AG04450 (cell line): ENCODE measurements at regions of chr7 and their contacts with region 1.

Region 1: DNA sequence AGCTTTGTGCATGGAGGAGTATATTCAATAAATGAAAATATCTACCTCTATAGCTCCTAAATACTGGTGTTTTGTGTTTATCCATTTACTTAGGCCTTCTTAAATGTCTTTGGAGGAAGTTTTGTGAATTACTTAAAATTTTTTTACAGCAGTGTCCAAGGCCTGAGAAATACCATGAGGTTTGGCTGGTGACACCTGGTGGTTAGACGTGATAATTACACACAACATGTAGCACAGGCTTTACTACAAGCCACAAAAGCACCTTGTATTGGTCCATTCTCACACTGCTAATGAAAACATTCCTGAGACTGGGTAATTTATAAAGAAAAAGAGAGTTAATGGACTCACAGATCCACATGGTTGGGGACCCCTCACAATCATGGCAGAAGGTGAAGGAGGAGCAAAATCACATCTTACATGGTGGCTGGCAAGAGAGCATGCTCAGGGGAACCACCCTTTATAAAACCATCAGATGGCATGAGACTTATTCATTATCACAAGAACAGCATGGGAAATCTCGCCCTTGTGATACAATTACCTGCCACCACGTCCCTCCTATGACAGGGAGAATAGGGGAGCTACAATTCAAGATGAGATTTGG is 20.6 kb downstream of the HYAL4 start:
- DNase-seq: peak; percentile 38
- H3K4me3 ChIP-seq: no peak overlapping the region
- H3K27ac ChIP-seq: no peak overlapping the region
- H3K27me3 ChIP-seq: peaks cover 2% of the 10 kb centered on the region
- CTCF ChIP-seq: peak; percentile 70

Region 2: GRCh38 chr7:123494193-123494796 is 371.3 kb before region 1 on chr7:
- CTCF ChIA-PET with region 1: interaction called, 15 read pairs
- POLR2A ChIA-PET with region 1: no interaction called
- DNase-seq: no peak
- H3K4me3 ChIP-seq: no peak overlapping the region
- H3K27ac ChIP-seq: no peak overlapping the region
- H3K27me3 ChIP-seq: no peaks in the 10 kb centered on the region
- CTCF ChIP-seq: peak; percentile 74

Region 3: DNA sequence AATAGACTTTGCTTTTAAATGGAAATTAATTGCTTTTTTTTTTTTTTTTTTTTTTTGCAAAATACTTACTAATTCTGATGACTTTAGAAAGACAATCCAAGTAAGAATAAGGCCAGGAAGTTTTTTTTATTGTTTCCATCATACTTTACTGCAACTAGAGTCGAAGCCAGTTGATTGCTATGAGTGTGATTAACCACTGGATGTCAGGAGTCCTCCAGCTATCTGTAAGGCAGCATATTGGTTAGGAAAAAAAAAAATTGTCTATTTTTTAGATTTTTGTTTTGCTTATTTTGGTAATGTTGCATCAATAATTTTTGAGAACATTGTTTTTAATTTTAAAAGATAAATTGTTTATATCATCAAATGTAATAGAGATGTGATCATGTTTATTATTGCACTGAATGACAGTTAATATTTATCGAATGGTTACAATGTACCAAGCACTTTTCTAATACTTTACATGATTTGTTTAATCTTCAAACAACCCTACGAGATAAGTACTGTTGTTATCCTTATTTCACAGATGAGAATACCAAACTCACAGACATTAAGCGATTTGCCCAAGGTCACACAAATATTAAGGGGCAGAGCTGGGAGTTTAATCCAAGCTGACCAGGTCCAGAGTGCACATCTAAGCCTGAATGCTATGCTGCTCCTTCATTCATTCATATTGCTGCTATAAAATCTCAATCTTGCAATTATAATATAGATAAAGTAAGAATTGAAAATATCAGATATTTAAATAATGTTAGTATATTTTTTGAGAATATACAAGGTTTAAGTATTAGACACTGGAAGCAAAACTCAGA is 229.9 kb before region 1 on chr7:
- CTCF ChIA-PET with region 1: interaction called, 78 read pairs
- POLR2A ChIA-PET with region 1: no interaction called
- DNase-seq: no peak
- H3K4me3 ChIP-seq: no peak overlapping the region
- H3K27ac ChIP-seq: no peak overlapping the region
- H3K27me3 ChIP-seq: peaks cover 3% of the 10 kb centered on the region
- CTCF ChIP-seq: peak; percentile 71

Region 4: GRCh38 chr7:123682690-123683089 is 182.9 kb before region 1 on chr7:
- CTCF ChIA-PET with region 1: interaction called, 28 read pairs
- POLR2A ChIA-PET with region 1: no interaction called
- DNase-seq: peak; percentile 38
- H3K4me3 ChIP-seq: no peak overlapping the region
- H3K27ac ChIP-seq: no peak overlapping the region
- H3K27me3 ChIP-seq: no peaks in the 10 kb centered on the region
- CTCF ChIP-seq: peak; percentile 61

Region 5: DNA sequence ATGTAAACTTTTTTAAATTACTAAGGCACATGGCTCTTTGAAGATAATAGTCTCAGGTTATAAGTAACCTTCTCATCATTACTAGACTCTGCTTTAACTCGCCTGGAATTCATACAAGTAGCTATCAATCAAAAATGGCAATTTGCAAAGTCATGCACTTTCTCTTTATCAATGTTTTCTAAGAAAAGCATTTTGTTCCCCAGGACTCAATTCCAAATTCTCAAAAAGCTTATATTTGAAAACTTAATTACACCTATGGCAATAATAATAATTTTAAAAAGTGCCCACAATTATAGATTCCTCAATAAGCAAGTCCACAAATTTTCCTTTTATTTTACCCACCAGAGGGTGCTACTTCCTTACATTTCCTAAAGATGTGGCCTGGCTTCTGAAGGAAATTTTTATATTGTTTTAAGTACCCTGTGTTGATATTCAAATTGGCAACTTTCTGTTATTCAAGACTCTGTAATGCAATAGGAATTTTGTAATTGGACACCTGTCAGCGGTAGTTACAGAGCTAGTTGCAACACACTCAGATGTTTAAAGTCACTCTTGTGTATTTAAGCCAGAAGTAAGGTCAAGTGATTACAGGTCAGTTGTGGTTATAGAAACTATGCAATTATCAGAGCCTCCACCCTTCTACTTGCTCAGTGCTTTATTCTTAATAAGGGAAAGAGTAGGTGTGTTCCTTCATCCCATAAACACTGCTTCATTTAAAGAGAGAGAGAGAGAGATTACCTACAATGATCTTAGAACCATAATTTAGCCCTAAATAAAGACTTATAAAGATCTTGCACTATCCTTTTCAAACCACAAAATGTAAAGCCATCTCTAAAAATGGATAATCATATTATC is 67.7 kb before region 1 on chr7:
- CTCF ChIA-PET with region 1: interaction called, 89 read pairs
- POLR2A ChIA-PET with region 1: no interaction called
- DNase-seq: peak; percentile 39
- H3K4me3 ChIP-seq: no peak overlapping the region
- H3K27ac ChIP-seq: no peak overlapping the region
- H3K27me3 ChIP-seq: peaks cover 6% of the 10 kb centered on the region
- CTCF ChIP-seq: peak; percentile 52